Posterior vena cava (tissue), 2 donors: ENCODE measurements at regions of chr5 and their contacts with region 1.

Region 1: GRCh38 chr5:115377468-115378217 is 81.2 kb upstream of the CCDC112 start:
- DNase-seq: no peak

Region 2: DNA sequence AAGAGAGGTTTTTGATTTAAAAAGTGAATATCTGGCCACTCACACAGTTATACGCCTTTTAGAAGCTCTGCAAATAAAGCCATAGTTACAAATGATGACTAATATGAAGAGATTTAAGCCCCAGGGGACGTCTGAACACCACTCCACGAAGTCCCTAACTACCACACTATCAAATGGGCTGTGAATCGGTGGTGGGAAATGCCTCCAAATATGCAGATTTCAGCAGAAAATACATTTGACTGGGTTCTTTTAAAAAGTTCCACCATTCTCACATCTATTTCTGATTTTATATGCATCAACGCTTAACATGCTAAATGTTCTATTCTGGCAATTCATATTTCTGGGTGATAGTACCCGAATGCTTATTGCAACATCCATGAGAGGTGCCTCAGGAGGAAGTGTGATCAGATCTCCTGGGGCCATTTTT is 202.1 kb after region 1 on chr5:
- intact Hi-C with region 1: loop called in 1 of 2 experiments (anchors 10 kb)
- DNase-seq: no peak